Activated T-helper 1 cell treated with anti-CD3 and anti-CD28 coated beads, Interleukin-12 subunit alpha, Interleukin-12 subunit beta, Interleukin-2, Interleukin-4 antibody, amounts not matched to agents 30 ng/mL and 10 ng/mL and 1 ng/mL, durations not matched to agents 14 hours and 24 hours and 36 hours (primary cell): ENCODE measurements at regions of chr19 and their contacts with region 1.

Region 1: DNA sequence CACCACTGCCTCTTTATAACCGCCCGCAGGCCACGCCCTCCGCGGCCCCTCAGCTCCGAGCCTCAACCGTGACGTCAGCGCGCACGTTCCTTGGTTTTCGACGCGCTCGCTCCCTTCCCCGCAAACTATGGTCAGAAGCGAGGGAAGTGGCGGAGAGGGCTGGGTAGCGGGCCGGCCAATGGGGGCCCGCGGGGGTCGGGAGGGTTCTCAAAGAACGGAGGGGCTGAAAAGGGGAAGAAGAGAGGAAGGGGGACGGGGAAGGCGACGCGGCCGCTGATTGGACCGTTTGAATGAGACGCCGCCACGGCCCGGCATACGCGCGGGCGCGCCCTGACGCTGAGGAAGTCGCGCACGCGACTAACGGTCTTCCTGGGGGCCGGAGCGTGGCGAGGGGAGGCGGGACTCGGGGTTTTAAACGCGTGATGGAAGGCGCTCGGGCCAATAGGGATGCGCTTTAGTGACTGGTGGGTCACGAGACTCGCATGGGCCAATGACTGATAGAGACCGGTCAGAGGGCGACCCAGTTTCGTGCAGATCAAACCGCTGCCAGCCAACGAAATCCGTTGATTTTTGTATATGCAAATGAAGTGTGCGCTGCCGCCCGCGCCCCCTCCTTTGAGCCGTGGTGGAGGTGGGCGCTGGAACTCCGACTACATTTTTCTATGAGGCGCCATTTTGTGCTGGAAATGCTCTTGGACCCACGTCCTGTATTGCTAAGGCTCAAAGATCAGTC is 378 bp upstream of the UBE2S start:
- DNase-seq: peak; percentile 96
- H3K4me3 Mint-ChIP-seq: peak overlapping the region; percentile 93
- H3K27ac Mint-ChIP-seq: peak overlapping the region; percentile 97
- H3K4me1 Mint-ChIP-seq: peaks cover 26% of the 10 kb centered on the region
- H3K27me3 Mint-ChIP-seq: peaks cover 6% of the 10 kb centered on the region

Region 2: GRCh38 chr19:54448774-54449700 is 958.9 kb before region 1 on chr19 and contains the start of gene LENG8:
- intact Hi-C with region 1: loop called (anchors 1 kb)
- DNase-seq: peak; percentile 96
- H3K4me3 Mint-ChIP-seq: peak within 1 kb of the TSS; percentile 99
- H3K27ac Mint-ChIP-seq: peak within 1 kb of the TSS; percentile 98
- H3K4me1 Mint-ChIP-seq: peaks cover 36% of the 10 kb centered on the region
- H3K27me3 Mint-ChIP-seq: no peaks in the 10 kb centered on the region
- total RNA-seq, gene LENG8: 192 and 193 TPM in 2 replicates

Region 3: GRCh38 chr19:55080968-55081772 is 326.8 kb before region 1 on chr19:
- intact Hi-C with region 1: loop called (anchors 5 kb)
- DNase-seq: peak; percentile 92
- H3K4me3 Mint-ChIP-seq: peak overlapping the region; percentile 88
- H3K27ac Mint-ChIP-seq: peak overlapping the region; percentile 67
- H3K4me1 Mint-ChIP-seq: peaks cover 23% of the 10 kb centered on the region
- H3K27me3 Mint-ChIP-seq: peaks cover 35% of the 10 kb centered on the region

Region 4: GRCh38 chr19:55301459-55302317 is 106.3 kb before region 1 on chr19:
- intact Hi-C with region 1: loop called (anchors 1 kb)
- DNase-seq: peak; percentile 91
- H3K4me3 Mint-ChIP-seq: peak overlapping the region; percentile 88
- H3K27ac Mint-ChIP-seq: peak overlapping the region; percentile 88
- H3K4me1 Mint-ChIP-seq: peaks cover 17% of the 10 kb centered on the region
- H3K27me3 Mint-ChIP-seq: no peaks in the 10 kb centered on the region

Region 5: GRCh38 chr19:55353803-55354697 is 53.9 kb before region 1 on chr19:
- intact Hi-C with region 1: no loop called
- DNase-seq: peak; percentile 45
- H3K4me3 Mint-ChIP-seq: peak overlapping the region; percentile 82
- H3K27ac Mint-ChIP-seq: no peak overlapping the region
- H3K4me1 Mint-ChIP-seq: peaks cover 26% of the 10 kb centered on the region
- H3K27me3 Mint-ChIP-seq: peaks cover 44% of the 10 kb centered on the region

Region 6: GRCh38 chr19:55461259-55461973 is 53.5 kb after region 1 on chr19 and contains the start of gene ISOC2:
- intact Hi-C with region 1: loop called (anchors 1 kb)
- DNase-seq: peak; percentile 100
- H3K4me3 Mint-ChIP-seq: peak within 1 kb of the TSS; percentile 81
- H3K27ac Mint-ChIP-seq: peak within 1 kb of the TSS; percentile 77
- H3K4me1 Mint-ChIP-seq: peaks cover 5% of the 10 kb centered on the region
- H3K27me3 Mint-ChIP-seq: peaks cover 2% of the 10 kb centered on the region
- total RNA-seq, gene ISOC2: 31.3 and 34.3 TPM in 2 replicates

Region 7: DNA sequence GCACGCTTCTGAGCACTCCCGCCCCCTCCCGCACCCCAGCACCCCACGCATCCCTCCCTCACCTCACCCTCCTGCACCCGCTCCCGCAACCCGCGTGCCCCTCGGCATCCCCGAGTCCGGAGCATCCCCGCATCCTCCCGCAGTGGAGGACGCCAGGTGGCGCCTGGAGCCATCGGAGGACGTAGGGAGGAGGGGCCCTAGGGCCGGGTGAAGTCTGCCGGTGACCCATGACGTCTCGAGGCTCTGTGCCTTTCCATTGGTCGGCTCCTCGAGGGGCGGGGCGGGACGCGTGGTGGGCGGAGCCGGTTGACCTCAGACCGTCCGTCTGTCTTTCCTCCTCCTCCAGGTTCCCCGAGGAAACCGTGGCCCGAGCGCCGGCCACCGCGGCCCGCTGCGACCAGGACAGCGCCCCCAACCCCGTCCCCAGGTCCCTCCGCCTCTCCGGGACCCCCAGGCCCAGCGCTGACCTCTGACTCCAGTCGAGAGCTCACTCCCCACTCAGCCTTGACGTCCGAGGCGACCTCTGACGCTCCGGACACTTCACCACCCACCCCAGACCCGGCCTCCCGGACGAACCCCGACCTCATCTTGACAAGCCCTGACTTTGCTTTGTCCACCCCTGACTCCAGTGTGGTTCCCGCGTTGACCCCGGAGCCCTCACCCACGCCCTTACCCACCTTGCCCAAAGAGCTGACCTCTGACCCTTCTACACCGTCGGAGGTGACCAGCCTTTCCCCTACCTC is 109.1 kb after region 1 on chr19:
- intact Hi-C with region 1: no loop called
- DNase-seq: peak; percentile 88
- H3K4me3 Mint-ChIP-seq: peak overlapping the region; percentile 66
- H3K27ac Mint-ChIP-seq: peak overlapping the region; percentile 68
- H3K4me1 Mint-ChIP-seq: no peaks in the 10 kb centered on the region
- H3K27me3 Mint-ChIP-seq: peaks cover 2% of the 10 kb centered on the region

Region 8: DNA sequence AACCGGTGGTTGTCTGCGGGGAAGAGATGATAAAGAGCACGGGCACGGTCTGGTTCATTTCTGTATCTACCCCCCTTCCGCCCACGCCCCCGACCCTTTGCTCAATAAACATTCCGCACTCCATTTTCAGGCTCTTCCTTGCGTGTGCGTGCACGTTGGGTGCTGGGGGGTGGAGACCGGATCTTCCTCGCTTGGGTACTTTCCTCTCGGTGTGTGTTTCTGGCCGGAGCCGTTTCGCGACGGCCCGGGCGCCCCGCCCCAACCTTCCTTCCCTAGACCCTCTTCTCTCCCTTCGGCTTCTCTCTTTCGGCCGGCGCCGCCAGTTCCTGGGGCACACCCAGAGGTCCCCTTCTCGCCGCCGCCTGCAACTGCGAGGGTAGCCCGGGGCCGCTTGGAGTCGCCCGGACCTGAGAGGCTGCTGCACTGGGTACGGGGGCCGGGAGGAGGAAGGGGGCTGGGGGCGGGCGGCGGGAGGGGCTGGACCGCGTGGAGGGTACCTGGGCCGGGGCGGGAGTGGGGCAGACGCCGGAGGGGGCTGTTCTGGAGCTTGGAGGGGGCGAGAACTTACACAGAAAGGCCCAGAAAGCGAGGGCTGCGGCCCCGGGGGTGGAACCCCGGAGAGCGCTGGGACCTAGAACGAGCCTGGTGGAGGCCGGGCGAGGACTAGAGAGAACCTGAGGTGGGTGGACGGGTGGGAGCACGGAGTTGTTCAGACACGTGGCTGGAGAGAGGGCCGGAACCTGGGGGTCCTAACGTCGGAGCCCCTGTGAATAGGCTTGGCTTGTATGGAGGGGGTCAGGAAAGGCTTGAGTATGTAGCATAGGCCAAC is 235.6 kb after region 1 on chr19 and contains the start of gene ZNF581:
- intact Hi-C with region 1: loop called (anchors 5 kb)
- DNase-seq: peak; percentile 77
- H3K4me3 Mint-ChIP-seq: peak within 1 kb of the TSS; percentile 100
- H3K27ac Mint-ChIP-seq: peak within 1 kb of the TSS; percentile 99
- H3K4me1 Mint-ChIP-seq: peaks cover 43% of the 10 kb centered on the region
- H3K27me3 Mint-ChIP-seq: no peaks in the 10 kb centered on the region
- total RNA-seq, gene ZNF581: 35.6 and 36.4 TPM in 2 replicates